ENCODE measurements at regions of chr4 and their contacts with region 1.

Region 1: DNA sequence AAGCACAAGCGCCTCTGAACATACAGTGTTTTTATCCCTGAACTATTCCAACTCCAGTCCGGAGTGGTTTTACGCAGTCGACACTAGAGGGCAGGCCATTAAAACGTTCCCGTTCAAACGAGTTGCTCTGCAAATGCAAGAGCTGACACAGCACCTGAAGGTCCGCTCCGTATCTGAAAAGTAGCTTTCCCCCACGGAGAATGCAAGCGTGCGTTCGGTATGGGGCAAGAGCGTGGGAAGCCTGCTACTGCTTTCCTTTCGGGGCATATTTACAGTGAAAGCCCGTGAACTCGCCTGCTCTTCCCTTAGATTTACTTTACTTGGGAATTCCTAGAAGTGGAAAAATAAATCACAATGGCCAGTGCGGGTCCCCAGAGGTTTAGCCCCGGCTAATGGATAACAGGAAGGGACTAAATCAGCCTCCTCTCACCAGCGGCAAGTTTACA is 190.8 kb downstream of the TSPAN5 start:
- DNase-seq: peak; percentile 79
- ATAC-seq: peak; percentile 87
- H3K4me3 ChIP-seq: peak overlapping the region; percentile 1 to 55 (median 37)
- H3K4me3 Mint-ChIP-seq: peak overlapping the region; percentile 79
- H3K27ac ChIP-seq: no peak overlapping the region
- H3K27ac Mint-ChIP-seq: peak overlapping the region; percentile 16
- H3K4me1 ChIP-seq: peaks cover 6 to 7% of the 10 kb centered on the region in 2 donors
- H3K4me1 Mint-ChIP-seq: peaks cover 8% of the 10 kb centered on the region
- H3K27me3 ChIP-seq: peaks cover 0 to 3% (median 0%) of the 10 kb centered on the region in 4 experiments
- H3K27me3 Mint-ChIP-seq: peaks cover 4% of the 10 kb centered on the region
- CTCF ChIP-seq: peak; percentile 72

Region 2: DNA sequence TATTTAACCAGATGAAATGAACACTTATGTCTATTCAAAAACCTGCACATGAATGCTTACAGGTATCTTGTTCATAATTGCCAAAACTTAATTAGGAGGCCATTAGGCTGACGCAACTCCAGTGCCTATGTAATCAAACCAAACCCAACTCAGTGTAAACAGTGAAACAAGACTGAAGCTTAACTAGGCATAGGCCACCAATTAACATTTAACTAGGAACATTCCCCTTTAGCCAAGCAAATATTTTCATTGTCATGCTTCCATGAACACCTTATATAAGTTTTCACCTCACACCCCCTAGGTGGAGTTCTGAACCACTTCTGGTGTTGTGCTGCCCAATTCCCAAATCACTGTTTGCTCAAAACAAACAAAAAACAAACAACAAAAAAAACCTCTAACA is 1010.4 kb before region 1 on chr4:
- CTCF ChIA-PET with region 1: no interaction called
- POLR2A ChIA-PET with region 1: no interaction called
- intact Hi-C with region 1: no loop called
- DNase-seq: no peak
- ATAC-seq: no peak
- H3K4me3 ChIP-seq: no peak overlapping the region
- H3K4me3 Mint-ChIP-seq: no peak overlapping the region
- H3K27ac ChIP-seq: no peak overlapping the region
- H3K27ac Mint-ChIP-seq: no peak overlapping the region
- H3K4me1 ChIP-seq: no peaks in the 10 kb centered on the region
- H3K4me1 Mint-ChIP-seq: no peaks in the 10 kb centered on the region
- H3K27me3 ChIP-seq: no peaks in the 10 kb centered on the region
- H3K27me3 Mint-ChIP-seq: no peaks in the 10 kb centered on the region
- CTCF ChIP-seq: no peak

Region 3: GRCh38 chr4:97513917-97514316 is 953.7 kb before region 1 on chr4:
- CTCF ChIA-PET with region 1: no interaction called
- POLR2A ChIA-PET with region 1: no interaction called
- intact Hi-C with region 1: no loop called
- DNase-seq: no peak
- ATAC-seq: no peak
- H3K4me3 ChIP-seq: no peak overlapping the region
- H3K4me3 Mint-ChIP-seq: no peak overlapping the region
- H3K27ac ChIP-seq: no peak overlapping the region
- H3K27ac Mint-ChIP-seq: no peak overlapping the region
- H3K4me1 ChIP-seq: no peaks in the 10 kb centered on the region
- H3K4me1 Mint-ChIP-seq: no peaks in the 10 kb centered on the region
- H3K27me3 ChIP-seq: no peaks in the 10 kb centered on the region
- H3K27me3 Mint-ChIP-seq: no peaks in the 10 kb centered on the region
- CTCF ChIP-seq: no peak

Region 4: GRCh38 chr4:98150092-98150761 is 317.4 kb before region 1 on chr4:
- CTCF ChIA-PET with region 1: interaction called, 14 read pairs
- POLR2A ChIA-PET with region 1: no interaction called
- intact Hi-C with region 1: loop called (anchors 1 kb)
- DNase-seq: peak; percentile 13
- ATAC-seq: no peak
- H3K4me3 ChIP-seq: no peak overlapping the region
- H3K4me3 Mint-ChIP-seq: no peak overlapping the region
- H3K27ac ChIP-seq: no peak overlapping the region
- H3K27ac Mint-ChIP-seq: no peak overlapping the region
- H3K4me1 ChIP-seq: peaks cover 7 to 20% of the 10 kb centered on the region in 2 donors
- H3K4me1 Mint-ChIP-seq: peaks cover 23% of the 10 kb centered on the region
- H3K27me3 ChIP-seq: no peaks in the 10 kb centered on the region
- H3K27me3 Mint-ChIP-seq: no peaks in the 10 kb centered on the region
- CTCF ChIP-seq: peak; percentile 70

Region 5: GRCh38 chr4:98446499-98447375 is 20.9 kb before region 1 on chr4:
- CTCF ChIA-PET with region 1: interaction called, 13 read pairs
- POLR2A ChIA-PET with region 1: interaction called, 3 read pairs
- intact Hi-C with region 1: no loop called
- DNase-seq: peak; percentile 75
- ATAC-seq: peak; percentile 72
- H3K4me3 ChIP-seq: peak overlapping the region in 4 of 5 experiments; percentile 32 to 53 (median 48)
- H3K4me3 Mint-ChIP-seq: peak overlapping the region; percentile 75
- H3K27ac ChIP-seq: peak overlapping the region; percentile 69 to 70
- H3K27ac Mint-ChIP-seq: peak overlapping the region; percentile 93
- H3K4me1 ChIP-seq: peaks cover 35 to 42% of the 10 kb centered on the region in 2 donors
- H3K4me1 Mint-ChIP-seq: peaks cover 45% of the 10 kb centered on the region
- H3K27me3 ChIP-seq: no peaks in the 10 kb centered on the region
- H3K27me3 Mint-ChIP-seq: no peaks in the 10 kb centered on the region
- CTCF ChIP-seq: no peak

Region 6: GRCh38 chr4:98828801-98829200 is 361.2 kb after region 1 on chr4:
- CTCF ChIA-PET with region 1: interaction called, 6 read pairs
- POLR2A ChIA-PET with region 1: no interaction called
- intact Hi-C with region 1: loop called (anchors 1 kb)
- DNase-seq: peak; percentile 29
- ATAC-seq: no peak
- H3K4me3 ChIP-seq: no peak overlapping the region
- H3K4me3 Mint-ChIP-seq: no peak overlapping the region
- H3K27ac ChIP-seq: no peak overlapping the region
- H3K27ac Mint-ChIP-seq: no peak overlapping the region
- H3K4me1 ChIP-seq: no peaks in the 10 kb centered on the region
- H3K4me1 Mint-ChIP-seq: no peaks in the 10 kb centered on the region
- H3K27me3 ChIP-seq: no peaks in the 10 kb centered on the region
- H3K27me3 Mint-ChIP-seq: peaks cover 11% of the 10 kb centered on the region
- CTCF ChIP-seq: no peak

Region 7: DNA sequence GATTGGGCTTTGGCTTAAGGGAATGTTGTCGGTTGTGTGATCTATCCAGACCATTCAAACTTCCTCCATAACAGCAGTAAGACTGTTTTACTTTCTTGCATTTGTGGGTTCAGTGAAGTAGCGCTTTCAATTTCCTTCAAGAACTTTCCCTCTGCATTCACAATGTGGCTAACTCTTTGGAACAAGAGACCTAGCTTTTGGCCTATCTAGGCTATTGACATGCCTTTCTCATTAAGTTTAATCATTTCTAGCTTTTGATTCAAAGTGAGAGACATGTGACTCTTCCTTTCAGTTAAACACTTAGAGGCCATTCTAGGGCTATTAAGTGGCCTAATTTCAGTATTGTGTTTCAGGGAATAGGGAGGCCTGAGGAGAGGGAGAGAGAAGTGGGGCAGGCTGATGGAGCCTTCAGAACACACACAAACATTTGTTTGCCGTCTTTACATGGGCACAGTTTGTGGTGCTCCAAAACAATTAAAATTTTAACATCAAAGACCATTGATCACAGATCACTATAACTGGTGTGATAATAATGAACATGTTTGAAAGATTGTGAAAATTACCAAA is 586.9 kb after region 1 on chr4:
- CTCF ChIA-PET with region 1: interaction called, 33 read pairs
- POLR2A ChIA-PET with region 1: no interaction called
- intact Hi-C with region 1: loop called (anchors 1 kb)
- DNase-seq: no peak
- ATAC-seq: no peak
- H3K4me3 ChIP-seq: no peak overlapping the region
- H3K4me3 Mint-ChIP-seq: no peak overlapping the region
- H3K27ac ChIP-seq: no peak overlapping the region
- H3K27ac Mint-ChIP-seq: peak overlapping the region; percentile 46
- H3K4me1 ChIP-seq: no peaks in the 10 kb centered on the region
- H3K4me1 Mint-ChIP-seq: peaks cover 14% of the 10 kb centered on the region
- H3K27me3 ChIP-seq: no peaks in the 10 kb centered on the region
- H3K27me3 Mint-ChIP-seq: no peaks in the 10 kb centered on the region
- CTCF ChIP-seq: no peak

Region 8: DNA sequence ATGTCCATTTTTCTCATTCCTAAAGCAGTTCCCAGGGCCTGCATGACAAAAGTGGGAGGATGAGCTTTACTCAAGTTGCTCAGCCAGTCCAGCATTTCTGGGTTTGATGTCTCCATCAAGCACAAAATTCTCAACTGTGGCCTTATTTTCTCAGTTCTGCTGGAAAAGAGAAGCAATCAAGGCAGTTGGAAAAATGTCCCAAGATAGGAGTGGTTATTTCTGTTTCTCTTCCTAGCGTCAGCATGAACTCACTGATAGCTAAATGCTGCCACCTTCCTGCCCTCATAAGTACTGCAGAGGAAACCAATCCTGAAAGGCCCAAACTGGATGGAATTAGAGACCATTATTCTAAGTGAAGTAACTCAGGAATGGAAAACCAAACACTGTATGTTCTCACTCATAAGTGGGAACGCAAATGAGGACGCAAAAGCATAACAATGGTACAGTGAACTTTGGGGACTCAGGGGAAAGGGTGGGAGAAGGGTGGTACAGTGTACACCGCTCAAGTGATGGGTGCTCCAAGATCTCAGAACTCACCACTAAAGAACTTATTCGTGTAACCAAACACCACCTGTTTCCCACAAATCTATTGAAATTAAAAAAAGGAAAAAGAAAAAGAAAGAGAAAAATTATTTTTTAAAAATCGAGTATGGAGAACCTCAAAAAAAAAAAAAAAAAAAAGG is 937.9 kb after region 1 on chr4:
- CTCF ChIA-PET with region 1: interaction called, 13 read pairs
- POLR2A ChIA-PET with region 1: no interaction called
- intact Hi-C with region 1: no loop called
- DNase-seq: peak; percentile 66
- ATAC-seq: peak; percentile 54
- H3K4me3 ChIP-seq: no peak overlapping the region
- H3K4me3 Mint-ChIP-seq: no peak overlapping the region
- H3K27ac ChIP-seq: no peak overlapping the region
- H3K27ac Mint-ChIP-seq: no peak overlapping the region
- H3K4me1 ChIP-seq: no peaks in the 10 kb centered on the region
- H3K4me1 Mint-ChIP-seq: peaks cover 2% of the 10 kb centered on the region
- H3K27me3 ChIP-seq: no peaks in the 10 kb centered on the region
- H3K27me3 Mint-ChIP-seq: no peaks in the 10 kb centered on the region
- CTCF ChIP-seq: peak; percentile 94

Region 9: GRCh38 chr4:99462875-99463464 is 995.3 kb after region 1 on chr4:
- CTCF ChIA-PET with region 1: interaction called, 8 read pairs
- POLR2A ChIA-PET with region 1: no interaction called
- intact Hi-C with region 1: loop called (anchors 2 kb)
- DNase-seq: peak; percentile 59
- ATAC-seq: peak; percentile 39
- H3K4me3 ChIP-seq: no peak overlapping the region
- H3K4me3 Mint-ChIP-seq: no peak overlapping the region
- H3K27ac ChIP-seq: no peak overlapping the region
- H3K27ac Mint-ChIP-seq: no peak overlapping the region
- H3K4me1 ChIP-seq: no peaks in the 10 kb centered on the region
- H3K4me1 Mint-ChIP-seq: no peaks in the 10 kb centered on the region
- H3K27me3 ChIP-seq: peaks cover 0 to 9% (median 0%) of the 10 kb centered on the region in 4 experiments
- H3K27me3 Mint-ChIP-seq: peaks cover 37% of the 10 kb centered on the region
- CTCF ChIP-seq: peak; percentile 84

Measured in B cell (primary cell).